Transverse colon (tissue), 4 donors: ENCODE measurements at regions of chr22 and their contacts with region 1.

Region 1: DNA sequence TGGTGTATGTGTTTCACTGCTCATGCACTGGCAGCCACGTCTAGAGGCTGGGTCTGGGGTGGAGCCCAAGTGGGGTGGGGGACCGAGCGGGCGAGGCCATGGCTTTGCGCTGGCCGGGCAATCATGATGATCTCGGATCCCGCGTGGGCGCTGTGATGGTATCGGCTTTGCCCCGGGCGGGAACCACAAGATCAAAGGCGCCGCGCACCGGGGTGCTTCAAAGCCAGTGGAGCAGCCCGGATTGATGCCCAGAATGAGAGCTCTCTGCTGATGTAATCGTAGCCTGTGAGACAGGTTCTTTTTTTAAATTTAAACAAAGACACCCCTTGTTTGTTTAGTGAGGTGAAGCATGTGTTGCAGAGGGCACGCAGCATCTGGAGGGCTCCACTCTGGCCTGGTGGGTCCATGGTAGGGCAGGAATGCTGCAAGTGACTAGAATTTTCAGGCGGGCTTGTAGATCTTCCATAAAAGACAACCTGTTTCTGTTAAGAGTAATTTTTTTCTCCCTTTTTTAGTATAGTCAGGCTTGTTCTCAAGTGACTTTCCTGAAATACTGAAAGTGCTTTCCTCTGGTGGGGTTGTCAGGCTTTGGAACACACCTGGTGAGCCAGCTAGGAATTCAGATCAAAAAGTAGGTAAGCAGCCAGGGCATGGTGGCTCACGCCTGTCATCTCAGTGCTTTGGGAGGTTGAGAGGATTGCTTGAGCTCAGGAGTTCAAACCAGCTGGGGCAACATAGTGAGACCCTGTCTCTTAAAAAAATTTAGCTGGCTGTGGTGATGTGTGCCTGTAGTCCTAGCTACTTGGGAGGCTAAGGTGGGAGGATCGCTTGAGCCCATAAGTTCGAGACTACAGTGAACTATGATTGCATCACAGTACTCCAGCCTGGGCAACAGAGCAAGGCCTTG is 40.7 kb downstream of the ZNRF3 start:
- DNase-seq: peak; percentile 38
- H3K4me3 ChIP-seq: no peak overlapping the region
- H3K27ac ChIP-seq: no peak overlapping the region
- H3K4me1 ChIP-seq: peaks cover 6 to 45% (median 18%) of the 10 kb centered on the region in 4 donors
- H3K27me3 ChIP-seq: no peaks in the 10 kb centered on the region
- CTCF ChIP-seq: no peak
- EP300 ChIP-seq: no peak
- POLR2A ChIP-seq: no peak

Region 2: GRCh38 chr22:28841111-28841510 is 83.0 kb before region 1 on chr22:
- in situ Hi-C with region 1: no loop called
- intact Hi-C with region 1: no loop called
- DNase-seq: no peak
- H3K4me3 ChIP-seq: no peak overlapping the region
- H3K27ac ChIP-seq: no peak overlapping the region
- H3K4me1 ChIP-seq: peaks cover 0 to 10% (median 4%) of the 10 kb centered on the region in 4 donors
- H3K27me3 ChIP-seq: no peaks in the 10 kb centered on the region
- CTCF ChIP-seq: no peak
- EP300 ChIP-seq: no peak
- POLR2A ChIP-seq: no peak

Region 3: GRCh38 chr22:28992565-28993356 is 68.7 kb after region 1 on chr22:
- in situ Hi-C with region 1: loop called in 1 of 4 experiments (anchors 10 kb)
- intact Hi-C with region 1: no loop called
- DNase-seq: no peak
- H3K4me3 ChIP-seq: no peak overlapping the region
- H3K27ac ChIP-seq: no peak overlapping the region
- H3K4me1 ChIP-seq: no peaks in the 10 kb centered on the region
- H3K27me3 ChIP-seq: no peaks in the 10 kb centered on the region
- CTCF ChIP-seq: no peak
- EP300 ChIP-seq: no peak
- POLR2A ChIP-seq: no peak